ENCODE measurements at regions of chr7 and their contacts with region 1.

Region 1: DNA sequence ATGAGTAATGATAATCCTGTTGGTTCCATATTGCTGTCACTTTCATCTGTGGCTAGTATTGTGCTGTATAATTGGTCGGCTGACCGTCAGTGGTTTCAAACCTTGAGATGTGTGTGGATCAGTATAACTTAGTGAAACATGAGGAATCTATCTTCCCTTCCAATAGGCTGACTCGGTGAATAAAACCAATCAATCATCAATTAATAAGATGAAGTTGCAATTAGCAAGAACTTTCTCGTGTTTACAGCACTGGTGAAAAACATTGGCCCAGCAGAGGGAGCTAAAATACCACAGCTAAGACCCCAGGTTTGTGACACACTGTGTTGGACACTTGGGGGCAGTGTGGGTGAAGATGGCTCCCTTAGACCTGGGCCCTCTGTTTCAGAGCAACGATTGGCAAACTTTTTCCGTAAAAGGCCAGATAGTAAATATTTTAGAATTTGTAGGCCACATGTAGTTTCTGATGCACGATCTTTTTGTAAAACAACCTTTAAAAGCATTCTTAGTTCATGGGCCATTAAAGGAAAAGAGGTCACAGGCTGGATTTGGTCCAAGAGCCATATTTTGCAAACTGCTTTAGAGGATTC is 47.8 kb downstream of the STRA8 start:
- DNase-seq: peak in 4 of 5 donors; percentile 74 to 82 (median 79)
- ATAC-seq: peak; percentile 69 to 98 (median 94)
- H3K4me3 ChIP-seq: peak overlapping the region in 2 of 12 donors; percentile 10 to 18
- H3K27ac ChIP-seq: no peak overlapping the region
- H3K4me1 ChIP-seq: peaks cover 0 to 8% (median 0%) of the 10 kb centered on the region in 12 donors
- H3K27me3 ChIP-seq: peaks cover 0 to 10% (median 0%) of the 10 kb centered on the region in 9 donors
- CTCF ChIP-seq: peak; percentile 84 to 99 (median 96)
- POLR2A ChIP-seq: no peak

Region 2: GRCh38 chr7:135083005-135083404 is 198.5 kb before region 1 on chr7:
- intact Hi-C with region 1: no loop called
- DNase-seq: no peak
- ATAC-seq: no peak
- H3K4me3 ChIP-seq: no peak overlapping the region
- H3K27ac ChIP-seq: no peak overlapping the region
- H3K4me1 ChIP-seq: no peaks in the 10 kb centered on the region
- H3K27me3 ChIP-seq: no peaks in the 10 kb centered on the region
- CTCF ChIP-seq: no peak
- POLR2A ChIP-seq: no peak

Region 3: DNA sequence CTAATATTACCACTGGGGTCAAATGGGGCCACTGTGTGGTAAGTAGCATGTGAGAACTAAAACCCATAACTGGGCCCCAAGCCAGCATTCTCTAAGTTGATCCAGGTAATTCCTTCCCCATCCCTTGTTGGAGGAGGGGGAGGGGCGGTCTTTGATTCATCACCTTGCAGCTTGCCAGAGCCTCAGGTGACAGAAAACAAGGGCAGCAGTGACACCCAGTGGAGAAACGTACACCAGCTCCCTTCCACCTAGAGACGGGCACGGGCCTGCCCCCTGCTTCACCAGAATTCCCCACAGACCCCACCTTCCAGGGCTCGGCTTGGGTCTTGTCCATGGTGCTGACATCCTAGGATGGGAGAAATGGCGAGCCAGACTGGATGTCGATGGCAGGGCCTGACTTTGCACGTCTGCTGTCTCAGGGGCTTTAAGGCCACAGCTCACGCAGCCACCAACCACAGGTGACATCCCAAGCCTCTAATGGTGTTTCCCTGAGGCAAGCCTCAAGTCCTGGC is 54.2 kb after region 1 on chr7:
- intact Hi-C with region 1: loop called in 8 of 10 experiments (anchors 2 to 10 kb)
- DNase-seq: peak in 4 of 5 donors; percentile 29 to 53 (median 44)
- ATAC-seq: peak; percentile 51 to 81 (median 73)
- H3K4me3 ChIP-seq: no peak overlapping the region
- H3K27ac ChIP-seq: no peak overlapping the region
- H3K4me1 ChIP-seq: no peaks in the 10 kb centered on the region
- H3K27me3 ChIP-seq: no peaks in the 10 kb centered on the region
- CTCF ChIP-seq: peak in 9 of 12 donors; percentile 27 to 51 (median 35)
- POLR2A ChIP-seq: no peak

Region 4: DNA sequence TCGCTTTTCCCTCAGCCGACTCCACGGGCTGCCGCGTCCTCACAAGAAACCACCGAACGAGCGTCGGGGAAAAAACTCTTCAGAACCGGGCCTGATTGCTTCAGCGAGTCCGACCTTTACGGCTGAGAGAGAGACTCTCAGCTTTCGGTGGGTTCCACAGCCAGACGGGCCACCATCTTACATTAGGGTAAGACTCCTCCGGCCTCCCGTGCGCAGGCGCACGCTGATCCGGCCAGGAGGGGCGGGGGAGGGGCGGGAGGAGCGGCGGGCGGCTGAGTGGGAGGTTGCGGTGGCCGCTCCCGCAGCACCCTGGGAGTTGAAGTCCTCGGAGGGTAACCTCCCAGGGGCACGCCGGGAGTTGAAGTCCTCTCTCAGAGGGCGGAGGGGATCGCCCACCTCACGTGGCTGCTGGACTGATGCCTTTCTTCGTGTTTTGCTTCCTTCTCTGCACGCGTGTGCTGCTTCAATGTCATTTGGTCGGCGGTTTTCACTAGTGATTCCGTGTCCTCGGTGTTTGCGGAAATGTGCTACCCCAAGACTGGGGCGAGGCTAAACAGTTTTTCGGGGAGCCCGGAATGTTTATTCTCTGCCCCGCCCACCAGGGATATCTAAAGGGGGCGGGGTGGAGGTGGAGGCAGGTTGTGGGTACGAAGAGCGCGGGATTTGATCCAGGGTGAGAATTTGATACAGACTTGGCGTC is 228.6 kb after region 1 on chr7 and contains the start of gene CNOT4:
- intact Hi-C with region 1: loop called in 4 of 10 experiments (anchors 2 to 5 kb)
- DNase-seq: peak; percentile 96 to 98 (median 97)
- ATAC-seq: peak; percentile 98 to 100 (median 99)
- H3K4me3 ChIP-seq: peak within 1 kb of the TSS; percentile 49 to 92 (median 77)
- H3K27ac ChIP-seq: peak within 1 kb of the TSS; percentile 35 to 97 (median 92)
- H3K4me1 ChIP-seq: peaks cover 6 to 40% (median 25%) of the 10 kb centered on the region in 12 donors
- H3K27me3 ChIP-seq: no peaks in the 10 kb centered on the region
- CTCF ChIP-seq: no peak
- POLR2A ChIP-seq: peak in 1 of 2 donors; percentile 57
- total RNA-seq, gene CNOT4: 21.2 to 29.2 (median 24.0) TPM

Region 5: GRCh38 chr7:135558337-135558767 is 276.9 kb after region 1 on chr7:
- intact Hi-C with region 1: loop called (anchors 1 to 5 kb)
- DNase-seq: peak in 4 of 5 donors; percentile 33 to 58 (median 41)
- ATAC-seq: peak; percentile 52 to 78 (median 71)
- H3K4me3 ChIP-seq: peak overlapping the region; percentile 67 to 98 (median 88)
- H3K27ac ChIP-seq: peak overlapping the region; percentile 92 to 100 (median 96)
- H3K4me1 ChIP-seq: peaks cover 0 to 33% (median 9%) of the 10 kb centered on the region in 12 donors
- H3K27me3 ChIP-seq: no peaks in the 10 kb centered on the region
- CTCF ChIP-seq: peak; percentile 13 to 68 (median 54)
- POLR2A ChIP-seq: no peak

Region 6: DNA sequence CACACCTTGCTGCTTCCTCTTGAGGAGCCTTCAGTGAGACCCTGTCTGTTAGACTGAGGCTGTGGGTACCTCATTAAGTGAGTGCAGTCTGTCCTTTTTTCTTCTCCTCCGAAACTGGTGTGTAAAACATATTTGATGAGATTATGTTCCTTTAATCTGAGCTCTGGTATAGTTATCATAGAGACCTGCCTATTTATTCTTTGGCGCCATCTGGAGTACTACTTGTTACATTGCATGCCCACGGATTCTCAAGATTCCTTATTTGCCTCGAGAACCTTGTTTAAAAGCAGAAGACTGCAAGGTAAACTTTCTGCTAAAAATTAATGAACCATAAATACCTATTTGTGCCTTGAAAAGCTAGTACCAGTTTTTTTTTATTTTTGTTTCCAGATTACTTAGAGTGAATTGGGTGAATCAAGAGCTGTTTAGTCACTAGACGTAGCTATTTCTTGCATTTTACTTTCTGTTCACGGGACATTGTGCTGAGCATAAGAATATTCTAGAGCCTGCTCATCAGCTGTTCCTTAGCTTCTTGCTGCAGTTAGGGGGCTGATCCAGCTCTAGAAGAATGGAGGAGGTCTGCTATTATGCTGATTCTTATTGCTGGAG is 363.9 kb after region 1 on chr7:
- intact Hi-C with region 1: loop called in 9 of 10 experiments (anchors 2 to 5 kb)
- DNase-seq: no peak
- ATAC-seq: peak in 3 of 4 donors; percentile 51 to 70 (median 62)
- H3K4me3 ChIP-seq: no peak overlapping the region
- H3K27ac ChIP-seq: no peak overlapping the region
- H3K4me1 ChIP-seq: peaks cover 0 to 2% (median 0%) of the 10 kb centered on the region in 12 donors
- H3K27me3 ChIP-seq: no peaks in the 10 kb centered on the region
- CTCF ChIP-seq: peak; percentile 56 to 79 (median 70)
- POLR2A ChIP-seq: no peak

Measured in heart left ventricle (tissue), 16 donors.